ENCODE measurements at regions of chr3 and their contacts with region 1.

Region 1: GRCh38 chr3:149273096-149273751 is 51.6 kb upstream of the CP start:
- DNase-seq: peak; percentile 64 to 83 (median 79)
- H3K4me3 ChIP-seq: no peak overlapping the region
- H3K4me3 Mint-ChIP-seq: no peak overlapping the region
- H3K27ac ChIP-seq: no peak overlapping the region
- H3K27ac Mint-ChIP-seq: no peak overlapping the region
- H3K4me1 ChIP-seq: peaks cover 10 to 16% of the 10 kb centered on the region in 2 donors
- H3K4me1 Mint-ChIP-seq: peaks cover 12% of the 10 kb centered on the region
- H3K27me3 ChIP-seq: no peaks in the 10 kb centered on the region
- H3K27me3 Mint-ChIP-seq: no peaks in the 10 kb centered on the region
- CTCF ChIP-seq: peak; percentile 97

Region 2: DNA sequence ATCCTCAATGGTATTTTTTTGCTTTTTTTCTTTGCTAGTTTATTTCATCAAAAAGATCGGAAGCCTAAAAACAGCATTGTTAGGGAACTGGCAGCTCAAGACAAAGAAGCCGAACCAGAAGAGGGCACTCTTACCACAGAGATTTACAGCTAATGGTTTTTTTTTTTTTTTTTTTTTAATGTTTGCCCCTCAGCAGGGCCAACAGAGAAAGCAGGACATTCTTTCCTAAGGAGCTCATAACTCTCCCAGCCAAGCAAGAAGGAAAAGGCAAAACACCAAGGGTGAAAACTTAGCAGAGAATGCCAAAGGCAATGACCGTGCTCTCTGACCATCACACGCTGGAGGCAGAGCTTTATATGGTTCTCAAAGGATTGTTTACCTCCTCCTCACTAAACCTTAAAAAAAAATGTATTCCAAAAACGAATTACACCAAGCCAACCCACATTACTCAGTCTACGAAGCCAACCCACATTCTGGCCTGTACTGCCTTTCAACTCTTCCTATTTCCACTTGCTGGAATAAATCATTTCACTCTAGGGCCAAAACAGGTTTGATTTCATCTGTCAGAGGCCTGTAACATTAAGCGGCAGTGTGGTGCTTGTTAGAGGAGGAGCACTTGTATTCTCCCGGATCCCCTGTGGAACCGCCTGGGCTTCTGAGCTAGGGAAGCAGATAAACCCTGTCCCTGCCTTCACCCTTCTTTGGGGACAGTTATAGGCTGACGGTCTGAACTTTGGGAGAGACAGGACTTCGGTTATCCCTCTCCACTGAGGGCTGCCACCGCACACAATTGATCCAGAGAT is 317.5 kb before region 1 on chr3:
- intact Hi-C with region 1: loop called (anchors 10 kb)
- DNase-seq: peak; percentile 16 to 35 (median 32)
- H3K4me3 ChIP-seq: no peak overlapping the region
- H3K4me3 Mint-ChIP-seq: no peak overlapping the region
- H3K27ac ChIP-seq: no peak overlapping the region
- H3K27ac Mint-ChIP-seq: peak overlapping the region in 1 of 7 donors; percentile 31
- H3K4me1 ChIP-seq: peaks cover 0 to 5% of the 10 kb centered on the region in 2 donors
- H3K4me1 Mint-ChIP-seq: peaks cover 8% of the 10 kb centered on the region
- H3K27me3 ChIP-seq: no peaks in the 10 kb centered on the region
- H3K27me3 Mint-ChIP-seq: peaks cover 0 to 2% (median 0%) of the 10 kb centered on the region in 3 donors
- CTCF ChIP-seq: peak; percentile 55

Region 3: GRCh38 chr3:149120051-149120972 is 152.9 kb before region 1 on chr3:
- intact Hi-C with region 1: loop called (anchors 2 kb)
- DNase-seq: peak; percentile 48 to 78 (median 63)
- H3K4me3 ChIP-seq: no peak overlapping the region
- H3K4me3 Mint-ChIP-seq: no peak overlapping the region
- H3K27ac ChIP-seq: no peak overlapping the region
- H3K27ac Mint-ChIP-seq: peak overlapping the region in 1 of 7 donors; percentile 31
- H3K4me1 ChIP-seq: no peaks in the 10 kb centered on the region
- H3K4me1 Mint-ChIP-seq: peaks cover 7% of the 10 kb centered on the region
- H3K27me3 ChIP-seq: no peaks in the 10 kb centered on the region
- H3K27me3 Mint-ChIP-seq: no peaks in the 10 kb centered on the region
- CTCF ChIP-seq: peak; percentile 77

Region 4: DNA sequence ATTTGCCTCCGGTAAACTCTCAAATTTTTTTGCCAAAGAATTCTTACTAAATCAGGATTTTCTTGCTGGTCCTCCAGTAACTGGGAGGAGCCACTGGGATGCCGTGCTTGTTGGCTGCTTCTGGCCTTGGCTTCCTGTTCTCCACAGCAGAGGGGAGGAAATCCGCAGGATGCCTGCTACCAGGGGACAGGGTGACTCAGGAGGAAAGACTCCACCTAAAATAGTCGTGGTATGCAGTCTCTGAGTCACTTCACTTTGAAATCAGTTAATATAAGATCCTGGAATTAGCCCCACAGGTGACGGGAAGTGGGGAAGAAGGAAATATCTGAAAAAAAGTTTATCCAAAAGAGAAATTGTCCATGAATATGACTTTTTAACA is 66.7 kb after region 1 on chr3:
- intact Hi-C with region 1: loop called in 1 of 2 experiments (anchors 5 kb)
- DNase-seq: peak; percentile 60 to 86 (median 65)
- H3K4me3 ChIP-seq: peak overlapping the region in 1 of 3 experiments; percentile 2
- H3K4me3 Mint-ChIP-seq: peak overlapping the region in 1 of 2 donors; percentile 10
- H3K27ac ChIP-seq: peak overlapping the region in 1 of 2 donors; percentile 9
- H3K27ac Mint-ChIP-seq: peak overlapping the region in 3 of 7 donors; percentile 5 to 55 (median 6)
- H3K4me1 ChIP-seq: peaks cover 27 to 35% of the 10 kb centered on the region in 2 donors
- H3K4me1 Mint-ChIP-seq: peaks cover 32% of the 10 kb centered on the region
- H3K27me3 ChIP-seq: no peaks in the 10 kb centered on the region
- H3K27me3 Mint-ChIP-seq: no peaks in the 10 kb centered on the region
- CTCF ChIP-seq: no peak

Measured in CD14-positive monocyte (primary cell).